IMR-90 (cell line): ENCODE measurements at regions of chr12 and their contacts with region 1.

Region 1: GRCh38 chr12:111812881-111813741 is 28.9 kb upstream of the MAPKAPK5 start:
- DNase-seq: peak; percentile 80
- ATAC-seq: peak; percentile 100
- H3K4me3 ChIP-seq: no peak overlapping the region
- H3K27ac ChIP-seq: no peak overlapping the region
- H3K4me1 ChIP-seq: no peaks in the 10 kb centered on the region
- H3K27me3 ChIP-seq: peaks cover 6% of the 10 kb centered on the region; the same call in 1 of the 2 replicates
- CTCF ChIP-seq: peak; percentile 89
- POLR2A ChIP-seq: no peak
- RAD21 ChIP-seq: peak; percentile 85

Region 2: DNA sequence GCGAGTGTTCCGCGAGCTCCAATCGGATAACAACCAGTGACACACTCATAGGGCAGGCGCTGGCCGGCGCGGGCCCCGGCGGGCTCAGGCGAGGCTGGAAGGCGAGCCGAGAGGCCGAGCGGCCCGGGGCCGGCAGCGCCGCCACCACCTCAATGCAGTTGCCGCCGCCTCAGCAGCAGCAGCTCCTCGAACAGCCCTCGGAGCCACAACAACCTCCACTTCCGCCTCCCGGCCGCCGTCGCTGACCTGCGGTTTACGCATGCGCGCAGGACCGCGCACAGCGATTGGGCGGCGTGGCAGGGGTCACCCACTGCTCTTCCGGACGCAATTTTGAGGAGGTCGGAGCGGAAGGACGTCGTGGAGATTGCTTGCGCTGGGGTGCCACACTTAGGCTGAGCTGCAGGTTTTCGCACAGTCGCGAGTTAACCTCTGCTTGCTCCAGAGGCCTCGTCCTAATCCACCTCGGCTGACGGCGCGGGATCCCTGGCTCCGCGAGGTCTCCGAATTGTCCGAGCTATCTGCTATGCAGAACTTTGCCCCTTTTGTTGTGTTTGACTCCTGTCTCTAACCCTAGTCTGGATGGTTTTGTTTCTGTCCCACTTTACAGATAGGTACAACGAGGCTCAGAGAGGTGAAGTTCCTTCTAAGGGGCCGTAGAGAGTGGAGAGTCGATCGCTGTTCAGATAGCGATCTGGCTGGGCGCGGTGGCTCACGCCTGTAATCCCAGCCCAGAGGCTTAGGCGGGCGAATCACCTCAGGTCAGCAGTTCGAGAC is 127.2 kb before region 1 on chr12 and contains the starts of genes ACAD10 and BRAP:
- CTCF ChIA-PET with region 1: no interaction called
- POLR2A ChIA-PET with region 1: no interaction called
- dilution Hi-C with region 1: no loop called
- in situ Hi-C with region 1: no loop called
- intact Hi-C with region 1: loop called (anchors 5 kb)
- DNase-seq: peak; percentile 92
- ATAC-seq: peak; percentile 96
- H3K4me3 ChIP-seq: peak within 1 kb of the TSS; percentile 97
- H3K27ac ChIP-seq: peak within 1 kb of the TSS; percentile 92
- H3K4me1 ChIP-seq: peaks cover 2% of the 10 kb centered on the region
- H3K27me3 ChIP-seq: no peaks in the 10 kb centered on the region
- CTCF ChIP-seq: no peak
- POLR2A ChIP-seq: peak; percentile 93
- RAD21 ChIP-seq: no peak; the same call in 1 of the 2 replicates
- total RNA-seq, gene ACAD10: 12.4 and 13.3 TPM in 2 replicates
- total RNA-seq, gene BRAP: 17.2 and 23.6 TPM in 2 replicates

Region 3: DNA sequence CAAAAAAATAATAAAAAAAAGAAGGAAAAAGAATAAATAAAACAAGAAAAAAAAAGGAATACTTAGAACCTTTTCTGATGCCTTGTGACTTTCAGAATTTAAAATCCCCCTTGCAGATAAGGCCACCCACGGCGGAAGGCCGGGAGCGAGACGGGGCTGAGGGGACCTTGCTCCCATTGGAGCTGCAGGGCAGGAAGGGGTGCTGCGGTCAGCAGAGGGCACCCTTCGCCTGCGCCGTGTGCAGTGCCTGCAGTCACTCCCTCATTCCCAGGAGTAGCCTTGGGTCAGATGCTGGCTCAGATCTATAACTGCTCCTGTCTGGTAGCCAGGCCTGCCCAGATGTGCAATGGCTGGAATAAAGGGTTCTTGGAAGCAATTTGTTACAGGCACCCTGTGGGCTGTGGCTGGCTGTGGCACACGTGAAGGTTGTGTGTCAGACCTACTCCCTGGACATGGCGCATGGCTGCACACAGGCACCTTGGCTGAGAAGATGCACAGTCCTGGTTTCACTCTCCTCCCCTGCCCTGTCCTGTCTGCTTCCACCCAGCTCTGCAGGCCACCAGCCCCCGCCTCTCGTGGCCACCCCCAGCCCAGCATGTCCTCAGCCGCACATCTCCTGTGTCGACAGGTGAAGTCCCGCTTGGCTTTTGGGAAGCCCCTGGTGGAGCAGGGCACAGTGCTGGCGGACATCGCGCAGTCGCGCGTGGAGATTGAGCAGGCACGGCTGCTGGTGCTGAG is 59.8 kb before region 1 on chr12:
- CTCF ChIA-PET with region 1: interaction called, 17 read pairs
- POLR2A ChIA-PET with region 1: no interaction called
- dilution Hi-C with region 1: no loop called
- in situ Hi-C with region 1: loop called (anchors 5 kb)
- intact Hi-C with region 1: loop called (anchors 1 kb)
- DNase-seq: peak; percentile 61
- ATAC-seq: peak; percentile 94
- H3K4me3 ChIP-seq: no peak overlapping the region
- H3K27ac ChIP-seq: no peak overlapping the region
- H3K4me1 ChIP-seq: peaks cover 13% of the 10 kb centered on the region; the same call in 1 of the 2 replicates
- H3K27me3 ChIP-seq: no peaks in the 10 kb centered on the region
- CTCF ChIP-seq: peak; percentile 86
- POLR2A ChIP-seq: no peak
- RAD21 ChIP-seq: peak; percentile 85

Region 4: GRCh38 chr12:111766608-111767361 is 46.3 kb before region 1 on chr12 and contains the start of gene ALDH2:
- CTCF ChIA-PET with region 1: no interaction called
- POLR2A ChIA-PET with region 1: no interaction called
- dilution Hi-C with region 1: no loop called
- in situ Hi-C with region 1: no loop called
- intact Hi-C with region 1: loop called (anchors 5 kb)
- DNase-seq: peak; percentile 43
- ATAC-seq: peak; percentile 97
- H3K4me3 ChIP-seq: peak within 1 kb of the TSS; percentile 74
- H3K27ac ChIP-seq: peak within 1 kb of the TSS; percentile 77
- H3K4me1 ChIP-seq: peaks cover 5% of the 10 kb centered on the region
- H3K27me3 ChIP-seq: no peaks in the 10 kb centered on the region
- CTCF ChIP-seq: 0 out of 2 replicates have a peak, but pooled peaks have one; percentile 6
- POLR2A ChIP-seq: no peak
- RAD21 ChIP-seq: no peak
- total RNA-seq, gene ALDH2: 12.5 and 16.0 TPM in 2 replicates

Region 5: DNA sequence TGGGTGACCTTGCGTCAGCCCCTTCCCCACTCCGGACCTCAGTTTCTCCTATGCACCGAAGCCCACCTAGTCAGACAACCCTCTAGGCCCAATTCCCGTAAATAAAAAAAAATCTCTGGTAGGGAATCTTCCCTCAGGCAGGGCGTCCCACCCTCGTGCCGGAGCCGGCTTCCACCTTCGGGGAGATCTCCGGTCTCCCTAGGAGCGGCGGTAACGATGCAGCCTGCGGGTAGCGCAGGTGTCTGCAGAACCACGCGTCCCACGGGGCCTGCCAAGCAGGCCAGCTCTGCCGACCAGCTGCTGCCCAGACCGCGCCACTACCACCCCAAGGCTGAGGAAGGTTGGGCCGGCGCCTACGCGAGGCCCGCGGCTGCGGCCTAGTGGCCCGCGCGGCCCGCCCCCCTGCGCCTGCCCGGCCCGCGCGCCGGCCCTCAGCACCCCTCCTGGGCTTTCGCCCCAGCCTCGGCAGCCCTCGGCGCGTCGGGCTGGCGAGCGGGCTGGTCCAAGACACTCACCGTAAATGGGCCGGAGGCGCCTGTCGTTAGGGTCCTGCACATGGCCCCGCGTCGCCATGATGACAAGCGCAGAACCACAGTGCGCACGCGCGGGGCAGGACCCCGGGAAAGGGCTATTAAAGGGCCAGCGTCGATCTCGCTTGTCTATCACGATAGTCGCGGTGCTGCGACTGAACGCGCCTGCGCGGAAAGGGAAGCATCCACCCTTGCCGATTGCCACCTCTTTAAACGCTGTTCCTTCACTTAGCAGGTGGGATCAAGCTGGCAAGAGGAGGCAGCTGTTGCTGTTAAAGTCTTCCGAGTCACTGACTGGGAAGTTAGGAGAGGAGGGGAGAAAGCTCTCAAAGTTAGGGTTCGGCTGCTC is 295.3 kb after region 1 on chr12 and contains the start of gene NAA25:
- CTCF ChIA-PET with region 1: no interaction called
- POLR2A ChIA-PET with region 1: no interaction called
- dilution Hi-C with region 1: no loop called
- in situ Hi-C with region 1: no loop called
- intact Hi-C with region 1: no loop called
- DNase-seq: peak; percentile 79
- ATAC-seq: peak; percentile 85
- H3K4me3 ChIP-seq: peak within 1 kb of the TSS; percentile 66
- H3K27ac ChIP-seq: peak within 1 kb of the TSS; percentile 99
- H3K4me1 ChIP-seq: peaks cover 19% of the 10 kb centered on the region
- H3K27me3 ChIP-seq: no peaks in the 10 kb centered on the region
- CTCF ChIP-seq: no peak
- POLR2A ChIP-seq: peak; percentile 58; the same call in 1 of the 2 replicates
- RAD21 ChIP-seq: no peak
- total RNA-seq, gene NAA25: 25.5 and 28.3 TPM in 2 replicates